ENCODE measurements at regions of chr11 and their contacts with region 1.

Region 1: DNA sequence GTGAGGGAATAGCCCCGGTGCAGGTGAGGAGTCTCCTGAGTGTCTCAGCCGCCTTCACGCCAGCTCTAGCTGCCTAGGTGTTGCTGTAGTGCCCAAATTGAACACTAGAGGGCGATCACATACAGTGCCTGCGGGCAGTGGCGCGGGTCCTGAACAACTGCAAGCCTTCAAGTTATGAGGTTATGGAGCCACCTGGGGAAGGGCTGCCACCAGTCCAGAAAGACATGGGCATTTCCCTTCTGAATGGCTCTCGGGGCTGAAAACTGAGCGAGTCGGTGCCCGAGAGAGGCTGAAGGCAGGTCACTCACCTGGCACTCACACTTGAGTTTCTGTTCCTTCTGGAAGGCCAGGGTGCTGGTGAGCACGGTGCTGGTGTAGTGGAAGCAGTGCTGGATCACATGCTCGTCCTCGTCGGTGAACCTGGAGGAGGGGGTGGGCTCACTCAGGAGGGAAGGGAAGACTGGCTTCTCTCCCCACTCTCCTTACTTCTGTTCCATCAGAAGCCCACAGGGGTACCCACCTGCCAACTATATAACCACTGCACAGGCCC is 88.4 kb downstream of the PDE2A start:
- DNase-seq: peak; percentile 45 to 54
- ATAC-seq: peak; percentile 74 to 86
- H3K4me3 ChIP-seq: no peak overlapping the region
- H3K27ac ChIP-seq: no peak overlapping the region
- H3K4me1 ChIP-seq: no peaks in the 10 kb centered on the region
- H3K27me3 ChIP-seq: peaks cover 8 to 32% (median 10%) of the 10 kb centered on the region in 3 donors
- CTCF ChIP-seq: peak; percentile 89 to 97 (median 92)
- POLR2A ChIP-seq: no peak

Region 2: GRCh38 chr11:72446902-72447769 is 138.7 kb before region 1 on chr11:
- in situ Hi-C with region 1: no loop called
- intact Hi-C with region 1: no loop called
- DNase-seq: no peak
- ATAC-seq: peak in 1 of 2 donors; percentile 44
- H3K4me3 ChIP-seq: no peak overlapping the region
- H3K27ac ChIP-seq: no peak overlapping the region
- H3K4me1 ChIP-seq: no peaks in the 10 kb centered on the region
- H3K27me3 ChIP-seq: no peaks in the 10 kb centered on the region
- CTCF ChIP-seq: peak in 4 of 5 experiments; percentile 23 to 57 (median 46)
- POLR2A ChIP-seq: no peak

Region 3: GRCh38 chr11:72642884-72643511 is 57.2 kb after region 1 on chr11:
- in situ Hi-C with region 1: loop called (anchors 5 kb)
- intact Hi-C with region 1: loop called (anchors 1 kb)
- DNase-seq: peak in 1 of 2 donors; percentile 35
- ATAC-seq: peak; percentile 62 to 78
- H3K4me3 ChIP-seq: peak overlapping the region; percentile 63 to 77 (median 68)
- H3K27ac ChIP-seq: peak overlapping the region; percentile 24 to 67 (median 52)
- H3K4me1 ChIP-seq: peaks cover 8 to 21% of the 10 kb centered on the region in 2 donors
- H3K27me3 ChIP-seq: peaks cover 0 to 11% (median 0%) of the 10 kb centered on the region in 3 donors
- CTCF ChIP-seq: peak; percentile 94 to 99 (median 98)
- POLR2A ChIP-seq: no peak

Region 4: DNA sequence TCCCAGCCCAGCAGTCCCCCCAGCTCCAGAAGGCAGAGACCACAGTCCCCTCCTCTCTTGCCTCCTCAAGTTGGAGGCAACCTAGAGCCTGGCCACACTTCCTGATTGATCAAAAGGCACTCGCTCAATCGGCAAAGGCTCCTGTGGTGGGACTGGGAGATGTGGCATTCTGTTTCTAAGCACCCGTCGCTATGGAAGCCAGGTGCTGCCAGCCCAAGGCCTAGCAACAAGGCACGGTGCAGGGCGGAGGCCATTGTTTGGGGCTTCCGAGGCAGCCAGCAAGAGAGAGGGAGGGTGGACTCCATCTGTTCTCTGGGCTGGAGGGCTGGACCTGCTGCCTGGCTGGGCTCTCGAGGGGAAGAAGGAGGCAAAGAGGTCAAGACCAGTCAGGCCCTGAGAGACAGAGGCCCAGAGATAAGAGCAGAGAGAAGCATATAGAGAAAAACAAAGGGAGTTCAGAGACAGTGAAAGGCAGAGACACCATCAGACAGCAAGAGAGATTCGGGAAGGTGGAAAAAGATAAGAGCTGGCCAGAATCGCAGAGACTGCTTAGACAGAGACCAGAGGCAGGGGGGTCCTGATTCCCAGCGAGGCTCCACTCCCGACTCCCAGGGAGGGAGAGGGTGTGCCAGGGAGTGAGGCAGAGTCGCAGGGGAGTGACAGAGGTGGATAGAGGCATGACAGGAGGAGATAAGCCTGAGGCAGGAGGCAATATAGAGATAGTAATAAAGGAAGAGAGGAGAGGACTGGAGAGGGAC is 67.2 kb after region 1 on chr11:
- in situ Hi-C with region 1: loop called (anchors 5 kb)
- intact Hi-C with region 1: no loop called
- DNase-seq: no peak
- ATAC-seq: no peak
- H3K4me3 ChIP-seq: no peak overlapping the region
- H3K27ac ChIP-seq: no peak overlapping the region
- H3K4me1 ChIP-seq: no peaks in the 10 kb centered on the region
- H3K27me3 ChIP-seq: no peaks in the 10 kb centered on the region
- CTCF ChIP-seq: no peak
- POLR2A ChIP-seq: no peak

Region 5: GRCh38 chr11:72683782-72684200 is 98.0 kb after region 1 on chr11:
- in situ Hi-C with region 1: no loop called
- intact Hi-C with region 1: loop called (anchors 2 kb)
- DNase-seq: peak in 1 of 2 donors; percentile 41
- ATAC-seq: peak; percentile 62 to 64
- H3K4me3 ChIP-seq: no peak overlapping the region
- H3K27ac ChIP-seq: no peak overlapping the region
- H3K4me1 ChIP-seq: no peaks in the 10 kb centered on the region
- H3K27me3 ChIP-seq: peaks cover 7 to 10% (median 9%) of the 10 kb centered on the region in 3 donors
- CTCF ChIP-seq: peak; percentile 80 to 94 (median 91)
- POLR2A ChIP-seq: no peak

Region 6: GRCh38 chr11:72752088-72752914 is 166.5 kb after region 1 on chr11 and contains the start of gene ARAP1:
- in situ Hi-C with region 1: no loop called
- intact Hi-C with region 1: no loop called
- DNase-seq: peak; percentile 46 to 66
- ATAC-seq: peak; percentile 86 to 87
- H3K4me3 ChIP-seq: peak within 1 kb of the TSS; percentile 64 to 78 (median 70)
- H3K27ac ChIP-seq: peak within 1 kb of the TSS; percentile 53 to 83 (median 76)
- H3K4me1 ChIP-seq: peaks cover 12 to 18% of the 10 kb centered on the region in 2 donors
- H3K27me3 ChIP-seq: no peaks in the 10 kb centered on the region
- CTCF ChIP-seq: no peak
- POLR2A ChIP-seq: peak in 1 of 2 donors; percentile 37
- total RNA-seq, gene ARAP1: 18.3 to 52.0 (median 26.0) TPM